Posterior vena cava (tissue), 2 donors: ENCODE measurements at regions of chr10 and their contacts with region 1.

Region 1: GRCh38 chr10:90857635-90858460 is at the start of gene HTR7:
- DNase-seq: peak; percentile 86
- total RNA-seq, gene HTR7: 0.83 to 1.0 TPM

Region 2: DNA sequence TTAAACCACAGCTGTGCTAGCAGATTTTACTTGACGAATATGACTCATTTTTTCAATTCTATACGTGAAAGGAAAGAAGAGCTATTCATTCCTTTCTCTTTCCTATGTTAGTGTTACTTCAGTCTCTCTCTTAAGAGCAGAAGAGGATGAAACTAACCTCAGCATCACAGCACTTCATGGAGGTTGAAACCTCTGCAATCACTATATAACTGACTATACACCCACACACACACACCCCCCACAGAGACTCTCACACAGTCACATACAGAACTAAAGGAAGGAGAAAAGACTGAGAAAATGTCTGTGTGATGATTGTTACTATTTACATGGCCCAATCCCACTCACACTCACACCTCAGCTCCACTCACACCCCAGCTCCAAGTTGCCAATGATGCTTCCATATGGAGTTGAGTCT is 1052.2 kb before region 1 on chr10:
- intact Hi-C with region 1: loop called in 1 of 2 experiments (anchors 5 kb)
- DNase-seq: no peak

Region 3: GRCh38 chr10:90389876-90390275 is 468.0 kb before region 1 on chr10:
- intact Hi-C with region 1: no loop called
- DNase-seq: no peak